ENCODE measurements at regions of chr1 and their contacts with region 1.

Region 1: DNA sequence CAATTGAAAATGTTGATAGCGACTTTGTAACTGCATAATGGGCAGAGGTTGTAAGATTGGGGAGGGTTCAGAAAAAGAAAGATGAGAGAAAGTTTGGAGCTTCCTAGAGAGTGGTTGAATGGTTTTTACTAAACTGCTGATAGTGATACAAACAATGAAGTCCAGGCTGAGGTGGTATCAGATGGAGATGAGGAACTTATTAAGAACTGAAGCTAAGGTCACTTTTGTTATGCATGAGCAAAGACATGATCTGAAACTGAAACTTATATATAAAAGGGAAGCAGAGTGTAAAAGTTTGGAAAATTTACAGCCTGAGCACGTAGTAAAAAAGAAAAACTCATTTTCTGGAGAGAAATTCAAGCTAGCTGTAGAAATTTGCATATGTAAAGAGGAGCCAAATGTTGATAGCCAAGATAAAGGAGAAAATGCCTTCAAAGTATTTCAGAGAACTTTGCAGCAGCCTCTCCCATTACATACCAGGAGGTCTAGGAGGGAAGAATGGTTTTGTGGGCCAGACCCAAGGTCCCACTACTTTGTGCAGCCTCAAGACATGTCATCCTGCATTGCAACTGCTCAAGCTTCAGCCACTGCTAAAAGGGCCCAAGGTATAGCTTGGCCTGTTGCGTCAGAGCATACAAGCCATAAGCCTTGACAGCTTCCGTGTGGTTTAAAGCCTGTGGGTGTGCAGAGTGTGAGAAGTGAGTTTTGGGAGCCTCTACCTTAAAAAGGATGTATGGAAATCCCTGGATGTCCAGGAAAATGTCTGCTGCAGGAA is 843.9 kb downstream of the AMY1C start:
- DNase-seq: no peak
- H3K4me3 Mint-ChIP-seq: no peak overlapping the region
- H3K27ac Mint-ChIP-seq: no peak overlapping the region
- H3K4me1 Mint-ChIP-seq: no peaks in the 10 kb centered on the region
- H3K27me3 Mint-ChIP-seq: no peaks in the 10 kb centered on the region

Region 2: GRCh38 chr1:104665300-104665699 is 71.7 kb after region 1 on chr1:
- intact Hi-C with region 1: loop called (anchors 2 kb)
- DNase-seq: no peak
- H3K4me3 Mint-ChIP-seq: no peak overlapping the region
- H3K27ac Mint-ChIP-seq: no peak overlapping the region
- H3K4me1 Mint-ChIP-seq: no peaks in the 10 kb centered on the region
- H3K27me3 Mint-ChIP-seq: no peaks in the 10 kb centered on the region